Activated CD8-positive, alpha-beta T cell treated with anti-CD3 and anti-CD28 coated beads, Interleukin-2, amount 10 ng/mL, durations not matched to agents 7 days and 5 days (primary cell): ENCODE measurements at regions of chrX and their contacts with region 1.

Region 1: DNA sequence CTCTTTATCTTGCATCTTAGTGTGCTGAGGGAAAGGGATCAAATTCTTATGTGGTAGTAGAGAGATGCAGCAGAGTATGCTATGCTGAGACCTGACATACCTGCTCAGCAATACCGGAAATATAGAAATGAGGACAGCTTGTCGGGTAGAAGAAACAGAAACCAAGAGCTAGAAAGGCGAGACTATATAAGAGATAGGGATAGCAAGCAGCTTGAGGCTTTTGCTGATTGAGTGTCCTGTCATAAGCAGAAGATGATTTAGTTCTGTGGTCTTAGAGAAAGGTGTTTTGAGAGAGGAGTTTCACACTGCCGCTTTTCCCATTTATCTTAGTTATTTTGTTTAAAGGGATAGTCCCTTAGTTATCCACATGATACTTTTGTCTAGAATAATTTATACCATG is 31.7 kb downstream of the USP9X start:
- DNase-seq: peak; percentile 35
- ATAC-seq: peak; percentile 84
- H3K4me3 Mint-ChIP-seq: peak overlapping the region; percentile 67
- H3K27ac Mint-ChIP-seq: peak overlapping the region; percentile 83
- H3K4me1 Mint-ChIP-seq: peaks cover 66% of the 10 kb centered on the region
- H3K27me3 Mint-ChIP-seq: no peaks in the 10 kb centered on the region

Region 2: GRCh38 chrX:40647307-40648197 is 469.4 kb before region 1 on chrX and contains the start of gene CXorf38:
- CTCF ChIA-PET with region 1: interaction called, 11 read pairs
- POLR2A ChIA-PET with region 1: no interaction called
- DNase-seq: peak; percentile 92
- ATAC-seq: peak; percentile 81
- H3K4me3 Mint-ChIP-seq: peak within 1 kb of the TSS; percentile 94
- H3K27ac Mint-ChIP-seq: peak within 1 kb of the TSS; percentile 96
- H3K4me1 Mint-ChIP-seq: peaks cover 12% of the 10 kb centered on the region
- H3K27me3 Mint-ChIP-seq: no peaks in the 10 kb centered on the region
- total RNA-seq, gene CXorf38: 19.3 to 19.9 TPM

Region 3: DNA sequence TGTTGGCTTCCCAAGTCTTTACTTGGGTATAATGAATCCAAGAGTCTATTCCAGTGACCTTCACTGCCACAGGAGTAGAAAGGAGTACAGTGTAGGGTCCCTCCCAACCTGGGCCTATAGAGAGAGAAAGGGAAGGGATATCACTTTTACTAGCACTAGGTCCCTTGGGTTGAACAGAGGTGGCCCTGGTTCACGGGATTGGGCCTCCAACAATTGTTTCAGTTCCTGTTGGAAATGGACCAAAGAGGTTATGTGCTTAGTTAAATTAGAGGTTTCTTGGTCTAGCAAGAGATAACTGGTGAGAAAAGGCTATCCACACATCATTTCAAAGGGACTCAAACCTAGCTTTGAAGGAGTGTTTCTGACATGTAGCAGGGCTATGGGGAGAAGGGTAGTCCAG is 324.5 kb before region 1 on chrX:
- CTCF ChIA-PET with region 1: interaction called, 12 read pairs
- POLR2A ChIA-PET with region 1: no interaction called
- DNase-seq: no peak
- ATAC-seq: no peak
- H3K4me3 Mint-ChIP-seq: no peak overlapping the region
- H3K27ac Mint-ChIP-seq: no peak overlapping the region
- H3K4me1 Mint-ChIP-seq: peaks cover 9% of the 10 kb centered on the region
- H3K27me3 Mint-ChIP-seq: peaks cover 5% of the 10 kb centered on the region

Region 4: GRCh38 chrX:40877887-40878286 is 239.1 kb before region 1 on chrX:
- CTCF ChIA-PET with region 1: interaction called, 32 read pairs
- POLR2A ChIA-PET with region 1: no interaction called
- DNase-seq: peak; percentile 23
- ATAC-seq: no peak
- H3K4me3 Mint-ChIP-seq: no peak overlapping the region
- H3K27ac Mint-ChIP-seq: no peak overlapping the region
- H3K4me1 Mint-ChIP-seq: no peaks in the 10 kb centered on the region
- H3K27me3 Mint-ChIP-seq: no peaks in the 10 kb centered on the region

Region 5: GRCh38 chrX:41153448-41153847 is 36.5 kb after region 1 on chrX:
- CTCF ChIA-PET with region 1: no interaction called
- POLR2A ChIA-PET with region 1: no interaction called
- DNase-seq: no peak
- ATAC-seq: no peak
- H3K4me3 Mint-ChIP-seq: no peak overlapping the region
- H3K27ac Mint-ChIP-seq: no peak overlapping the region
- H3K4me1 Mint-ChIP-seq: peaks cover 2% of the 10 kb centered on the region
- H3K27me3 Mint-ChIP-seq: no peaks in the 10 kb centered on the region

Region 6: GRCh38 chrX:41245641-41246040 is 128.7 kb after region 1 on chrX:
- CTCF ChIA-PET with region 1: no interaction called
- POLR2A ChIA-PET with region 1: no interaction called
- DNase-seq: no peak
- ATAC-seq: no peak
- H3K4me3 Mint-ChIP-seq: no peak overlapping the region
- H3K27ac Mint-ChIP-seq: no peak overlapping the region
- H3K4me1 Mint-ChIP-seq: no peaks in the 10 kb centered on the region
- H3K27me3 Mint-ChIP-seq: peaks cover 2% of the 10 kb centered on the region

Region 7: GRCh38 chrX:41308883-41309647 is 192.1 kb after region 1 on chrX:
- CTCF ChIA-PET with region 1: no interaction called
- POLR2A ChIA-PET with region 1: no interaction called
- DNase-seq: no peak
- ATAC-seq: no peak
- H3K4me3 Mint-ChIP-seq: no peak overlapping the region
- H3K27ac Mint-ChIP-seq: no peak overlapping the region
- H3K4me1 Mint-ChIP-seq: no peaks in the 10 kb centered on the region
- H3K27me3 Mint-ChIP-seq: no peaks in the 10 kb centered on the region